ENCODE measurements at regions of chr18 and their contacts with region 1.

Region 1: DNA sequence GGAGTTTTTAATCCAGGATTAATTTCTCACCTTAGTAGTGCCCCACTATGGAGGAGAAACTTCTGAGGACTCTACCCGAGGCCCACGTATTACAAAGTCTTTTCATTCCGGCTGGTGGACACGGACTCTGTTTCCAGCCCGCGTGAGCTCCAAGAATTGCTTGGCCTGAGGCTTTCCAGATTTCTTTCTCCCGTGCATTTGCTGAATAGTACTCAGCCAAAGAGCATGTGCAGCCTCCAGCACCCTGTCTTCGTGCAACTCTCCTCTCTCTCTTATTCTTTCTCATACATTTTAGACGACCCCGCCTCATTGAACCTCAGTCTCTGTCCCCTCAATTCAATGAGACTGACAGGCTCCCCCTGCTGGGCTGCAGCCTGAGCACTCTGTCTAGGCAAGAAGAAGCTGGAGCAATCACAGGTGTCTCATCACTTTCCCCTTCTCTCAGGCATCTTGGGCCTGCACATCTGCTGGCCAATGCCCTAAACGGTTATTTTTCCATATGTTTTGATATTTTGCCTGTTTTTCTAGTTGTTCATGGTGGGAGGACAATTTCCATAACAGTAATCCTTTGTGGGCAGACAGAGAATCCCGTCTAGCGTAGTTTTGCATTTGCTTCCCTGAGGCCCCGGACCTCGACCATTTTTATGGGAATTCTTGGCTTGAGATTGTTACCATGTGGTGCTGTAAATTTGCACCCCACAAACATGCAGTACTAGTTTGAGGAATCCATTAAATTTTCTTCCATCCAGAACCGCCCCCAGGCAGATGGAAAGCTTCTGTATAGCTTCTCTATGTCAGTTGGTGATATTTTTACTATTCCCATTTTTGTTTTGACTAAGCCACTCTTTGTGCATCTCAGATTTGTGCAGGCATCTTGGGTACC is 50.1 kb upstream of the LPIN2 start:
- DNase-seq: peak; percentile 46
- H3K4me3 ChIP-seq: no peak overlapping the region
- H3K27ac ChIP-seq: no peak overlapping the region
- H3K4me1 ChIP-seq: peaks cover 8% of the 10 kb centered on the region
- H3K27me3 ChIP-seq: no peaks in the 10 kb centered on the region
- CTCF ChIP-seq: peak; percentile 70 to 82
- POLR2A ChIP-seq: no peak

Region 2: DNA sequence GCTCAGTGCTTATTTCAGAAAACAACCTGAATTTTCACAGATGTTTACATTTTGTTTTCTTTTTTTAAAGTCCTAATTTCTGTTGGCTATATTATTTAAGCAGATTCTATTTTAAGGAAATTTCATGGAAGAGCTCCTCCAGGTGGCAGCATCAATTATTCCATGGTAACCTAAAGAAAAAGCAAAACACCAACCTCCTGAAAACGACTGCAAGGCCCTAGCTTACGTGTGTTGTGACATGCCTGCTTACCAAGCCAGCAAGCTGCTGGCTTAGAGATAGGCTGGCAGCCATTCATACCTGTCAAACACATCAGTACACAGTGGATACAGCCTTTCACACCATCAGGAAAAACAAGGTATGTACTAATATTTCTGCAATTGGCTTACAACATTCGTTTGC is 115.0 kb before region 1 on chr18:
- CTCF ChIA-PET with region 1: interaction called, 19 read pairs
- POLR2A ChIA-PET with region 1: no interaction called
- dilution Hi-C with region 1: no loop called
- intact Hi-C with region 1: no loop called
- DNase-seq: peak; percentile 62
- H3K4me3 ChIP-seq: no peak overlapping the region
- H3K27ac ChIP-seq: peak overlapping the region; percentile 5
- H3K4me1 ChIP-seq: no peaks in the 10 kb centered on the region
- H3K27me3 ChIP-seq: no peaks in the 10 kb centered on the region
- CTCF ChIP-seq: peak in 1 of 2 donors; percentile 38
- POLR2A ChIP-seq: no peak

Region 3: GRCh38 chr18:3002732-3003131 is 60.3 kb before region 1 on chr18:
- CTCF ChIA-PET with region 1: interaction called, 12 read pairs
- POLR2A ChIA-PET with region 1: no interaction called
- dilution Hi-C with region 1: no loop called
- intact Hi-C with region 1: no loop called
- DNase-seq: no peak
- H3K4me3 ChIP-seq: no peak overlapping the region
- H3K27ac ChIP-seq: no peak overlapping the region
- H3K4me1 ChIP-seq: peaks cover 2% of the 10 kb centered on the region
- H3K27me3 ChIP-seq: no peaks in the 10 kb centered on the region
- CTCF ChIP-seq: no peak
- POLR2A ChIP-seq: no peak

Region 4: GRCh38 chr18:3037423-3037915 is 25.6 kb before region 1 on chr18:
- CTCF ChIA-PET with region 1: interaction called, 25 read pairs
- POLR2A ChIA-PET with region 1: no interaction called
- dilution Hi-C with region 1: no loop called
- intact Hi-C with region 1: no loop called
- DNase-seq: peak; percentile 76
- H3K4me3 ChIP-seq: no peak overlapping the region
- H3K27ac ChIP-seq: peak overlapping the region; percentile 43
- H3K4me1 ChIP-seq: peaks cover 8% of the 10 kb centered on the region
- H3K27me3 ChIP-seq: no peaks in the 10 kb centered on the region
- CTCF ChIP-seq: no peak
- POLR2A ChIP-seq: no peak

Region 5: GRCh38 chr18:3081584-3081991 is 18.5 kb after region 1 on chr18:
- CTCF ChIA-PET with region 1: interaction called, 104 read pairs
- POLR2A ChIA-PET with region 1: no interaction called
- dilution Hi-C with region 1: no loop called
- intact Hi-C with region 1: no loop called
- DNase-seq: peak; percentile 75
- H3K4me3 ChIP-seq: no peak overlapping the region
- H3K27ac ChIP-seq: peak overlapping the region; percentile 53
- H3K4me1 ChIP-seq: peaks cover 37% of the 10 kb centered on the region
- H3K27me3 ChIP-seq: no peaks in the 10 kb centered on the region
- CTCF ChIP-seq: no peak
- POLR2A ChIP-seq: no peak

Region 6: DNA sequence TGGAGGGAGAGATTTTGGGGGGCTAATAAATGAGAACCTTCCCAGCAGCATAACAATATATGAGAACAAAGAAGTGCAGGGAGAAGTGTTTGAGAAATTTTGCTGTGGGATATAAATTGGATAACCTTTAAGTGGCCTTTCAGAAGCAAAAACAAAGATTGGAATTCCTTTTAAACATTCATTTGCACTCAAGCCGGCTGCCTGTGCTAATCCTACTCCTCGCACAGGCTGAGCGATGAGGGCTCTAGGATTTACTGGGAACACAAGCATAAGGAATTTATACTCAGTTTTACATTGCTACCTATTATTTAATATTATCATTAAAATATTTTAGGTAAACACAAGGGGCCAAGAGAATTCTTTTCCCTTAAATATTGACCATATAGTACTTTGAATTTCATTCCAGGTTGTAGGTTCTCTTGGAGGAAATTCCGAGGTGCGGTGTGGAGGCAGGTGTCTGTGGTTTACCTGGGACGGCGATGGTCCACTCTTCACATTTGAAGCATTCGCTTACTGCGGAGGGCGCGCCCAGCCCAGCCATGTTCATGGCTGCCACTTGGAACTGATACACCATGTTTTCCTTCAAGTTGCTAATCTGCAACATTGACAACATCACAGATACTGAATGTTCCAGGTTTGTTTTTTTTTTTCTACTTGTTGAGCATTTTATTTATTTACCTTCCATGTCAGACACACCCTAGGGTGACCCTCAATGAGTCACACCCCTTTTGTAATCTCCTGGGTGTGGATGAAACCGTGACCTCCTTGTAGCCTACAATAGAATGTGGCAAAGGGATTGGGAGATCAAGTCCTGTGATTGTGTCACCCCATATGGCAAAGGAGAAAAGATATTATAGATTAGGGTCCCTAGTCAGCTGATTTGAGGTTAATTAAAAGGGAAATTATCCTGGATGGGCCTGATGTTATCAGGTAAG is 56.6 kb after region 1 on chr18:
- CTCF ChIA-PET with region 1: interaction called, 10 read pairs
- POLR2A ChIA-PET with region 1: no interaction called
- dilution Hi-C with region 1: no loop called
- intact Hi-C with region 1: no loop called
- DNase-seq: no peak
- H3K4me3 ChIP-seq: no peak overlapping the region
- H3K27ac ChIP-seq: no peak overlapping the region
- H3K4me1 ChIP-seq: no peaks in the 10 kb centered on the region
- H3K27me3 ChIP-seq: no peaks in the 10 kb centered on the region
- CTCF ChIP-seq: no peak
- POLR2A ChIP-seq: no peak